H1 (cell line): ENCODE measurements at regions of chr12 and their contacts with region 1.

Region 1: DNA sequence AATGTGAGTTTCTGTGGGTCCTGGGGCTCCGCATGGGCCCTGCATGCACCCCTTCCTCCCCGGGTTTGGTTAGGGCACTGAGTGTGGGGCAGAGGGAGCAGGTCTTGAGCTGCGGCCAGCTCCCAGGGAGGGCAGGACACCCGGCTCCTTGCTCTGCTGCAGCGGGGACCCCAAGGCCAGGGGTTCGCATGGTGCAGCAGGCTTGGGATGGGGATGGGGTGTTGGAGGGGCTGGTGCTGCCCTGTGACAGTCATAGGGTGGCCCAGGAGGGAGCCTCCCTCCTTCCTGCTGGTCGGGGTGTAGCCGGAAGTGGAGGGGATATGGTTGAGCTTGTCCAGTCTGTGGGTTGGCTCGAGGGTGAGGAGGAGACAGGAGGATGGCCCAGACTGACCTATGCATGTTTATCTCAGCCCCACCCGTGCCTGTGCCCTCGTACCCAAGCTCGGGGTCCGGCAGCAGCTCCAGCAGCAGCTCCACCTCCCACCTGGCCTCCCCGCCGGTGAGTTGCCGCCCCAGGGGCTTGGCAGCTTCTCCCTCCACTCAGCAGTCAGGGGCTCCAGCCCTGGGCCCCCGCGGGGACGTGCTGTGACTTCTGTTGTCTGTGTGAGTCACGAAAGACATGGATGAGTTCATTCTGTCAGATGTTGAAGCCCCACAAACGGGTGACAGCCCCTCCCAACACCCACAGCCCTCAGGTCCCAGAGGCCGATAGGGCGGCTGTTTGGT is 16.0 kb downstream of the ULK1 start:
- DNase-seq: no peak
- H3K4me3 ChIP-seq: no peak overlapping the region
- H3K27ac ChIP-seq: no peak overlapping the region
- H3K4me1 ChIP-seq: no peaks in the 10 kb centered on the region
- H3K27me3 ChIP-seq: no peaks in the 10 kb centered on the region
- CTCF ChIP-seq: no peak
- EP300 ChIP-seq: no peak
- POLR2A ChIP-seq: no peak
- RAD21 ChIP-seq: no peak

Region 2: DNA sequence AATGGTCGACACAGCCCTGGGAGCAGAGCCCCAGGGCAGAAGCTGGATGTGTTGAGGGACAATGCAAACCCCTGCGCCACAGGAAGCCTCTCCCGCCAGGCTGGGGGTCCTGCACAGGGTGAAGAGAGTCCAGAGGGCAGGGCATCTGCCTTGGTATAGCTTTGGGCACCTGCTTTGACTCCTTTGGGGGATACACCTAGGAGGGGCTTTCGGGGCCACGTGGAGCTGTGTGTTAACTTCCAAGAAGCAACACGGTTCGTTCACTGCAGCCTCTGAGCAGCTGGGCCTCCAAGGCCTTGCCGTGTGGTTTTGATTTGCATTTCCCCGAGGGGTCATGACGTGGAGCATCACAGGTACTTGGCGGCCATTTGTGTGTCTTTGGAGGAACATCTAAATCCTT is 12.8 kb after region 1 on chr12:
- CTCF ChIA-PET with region 1: interaction called, 5 read pairs
- POLR2A ChIA-PET with region 1: interaction called, 27 read pairs
- DNase-seq: no peak
- H3K4me3 ChIP-seq: no peak overlapping the region
- H3K27ac ChIP-seq: no peak overlapping the region
- H3K4me1 ChIP-seq: peaks cover 0 to 3% (median 1%) of the 10 kb centered on the region in 4 experiments; a peak in 2 of 7 replicates
- H3K27me3 ChIP-seq: no peaks in the 10 kb centered on the region
- CTCF ChIP-seq: no peak
- EP300 ChIP-seq: no peak
- POLR2A ChIP-seq: no peak
- RAD21 ChIP-seq: no peak